Caki2 (cell line): ENCODE measurements at regions of chr10 and their contacts with region 1.

Region 1: GRCh38 chr10:29841724-29842649 is 207.2 kb upstream of the SVIL start:
- DNase-seq: peak; percentile 78

Region 2: GRCh38 chr10:29714096-29714874 is 127.7 kb before region 1 on chr10:
- in situ Hi-C with region 1: no loop called
- DNase-seq: no peak

Region 3: GRCh38 chr10:29804025-29804852 is 37.7 kb before region 1 on chr10:
- in situ Hi-C with region 1: loop called (anchors 5 kb)
- DNase-seq: peak; percentile 97